ENCODE measurements at regions of chr15 and their contacts with region 1.

Region 1: DNA sequence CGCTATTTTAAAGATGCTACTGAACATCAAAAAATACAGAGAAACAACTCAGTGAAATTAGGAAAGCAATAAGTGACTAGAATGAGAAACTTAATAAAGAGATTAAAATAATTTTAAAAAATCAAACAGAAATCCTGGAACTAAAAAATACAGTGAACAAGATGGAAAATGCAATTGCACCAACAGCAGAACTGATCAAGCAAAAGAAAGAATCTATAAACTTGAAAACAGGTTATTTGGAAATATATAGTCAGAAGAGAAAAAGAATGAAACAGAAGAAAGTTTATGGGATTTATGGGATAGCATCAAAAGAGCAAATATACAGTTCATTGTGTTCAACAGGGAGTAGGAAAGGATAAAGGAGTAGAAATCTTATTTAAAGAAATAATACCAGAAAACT is 53.3 kb downstream of the MEX3B start:
- DNase-seq: no peak
- ATAC-seq: no peak
- H3K4me3 ChIP-seq: no peak overlapping the region
- H3K27ac ChIP-seq: no peak overlapping the region
- H3K4me1 ChIP-seq: no peaks in the 10 kb centered on the region
- H3K27me3 ChIP-seq: no peaks in the 10 kb centered on the region
- CTCF ChIP-seq: no peak

Region 2: GRCh38 chr15:81914734-81915256 is 77.7 kb before region 1 on chr15:
- intact Hi-C with region 1: loop called in 1 of 10 experiments (anchors 10 kb)
- DNase-seq: peak; percentile 52 to 63
- ATAC-seq: peak; percentile 71 to 96 (median 88)
- H3K4me3 ChIP-seq: no peak overlapping the region
- H3K27ac ChIP-seq: peak overlapping the region; percentile 46 to 88 (median 75)
- H3K4me1 ChIP-seq: peaks cover 6 to 42% (median 32%) of the 10 kb centered on the region in 9 donors
- H3K27me3 ChIP-seq: no peaks in the 10 kb centered on the region
- CTCF ChIP-seq: no peak

Region 3: GRCh38 chr15:81950841-81951414 is 41.6 kb before region 1 on chr15:
- intact Hi-C with region 1: no loop called
- DNase-seq: no peak
- ATAC-seq: no peak
- H3K4me3 ChIP-seq: no peak overlapping the region
- H3K27ac ChIP-seq: no peak overlapping the region
- H3K4me1 ChIP-seq: peaks cover 0 to 9% (median 0%) of the 10 kb centered on the region in 9 donors
- H3K27me3 ChIP-seq: no peaks in the 10 kb centered on the region
- CTCF ChIP-seq: no peak